ENCODE measurements at regions of chr6 and their contacts with region 1.

Region 1: GRCh38 chr6:144179828-144180227 is 29.5 kb downstream of the STX11 start:
- DNase-seq: no peak
- H3K4me3 Mint-ChIP-seq: no peak overlapping the region
- H3K27ac Mint-ChIP-seq: no peak overlapping the region
- H3K4me1 Mint-ChIP-seq: peaks cover 55% of the 10 kb centered on the region
- H3K27me3 Mint-ChIP-seq: no peaks in the 10 kb centered on the region

Region 2: GRCh38 chr6:144106206-144106605 is 73.6 kb before region 1 on chr6:
- CTCF ChIA-PET with region 1: no interaction called
- intact Hi-C with region 1: no loop called
- DNase-seq: no peak
- H3K4me3 Mint-ChIP-seq: no peak overlapping the region
- H3K27ac Mint-ChIP-seq: no peak overlapping the region
- H3K4me1 Mint-ChIP-seq: peaks cover 11% of the 10 kb centered on the region
- H3K27me3 Mint-ChIP-seq: no peaks in the 10 kb centered on the region

Region 3: GRCh38 chr6:144195679-144196270 is 15.9 kb after region 1 on chr6:
- CTCF ChIA-PET with region 1: no interaction called
- intact Hi-C with region 1: loop called (anchors 2 kb)
- DNase-seq: no peak
- H3K4me3 Mint-ChIP-seq: no peak overlapping the region
- H3K27ac Mint-ChIP-seq: no peak overlapping the region
- H3K4me1 Mint-ChIP-seq: peaks cover 10% of the 10 kb centered on the region
- H3K27me3 Mint-ChIP-seq: no peaks in the 10 kb centered on the region